Activated CD4-positive, alpha-beta T cell treated with anti-CD3 and anti-CD28 coated beads, Interleukin-2, amount 10 ng/mL, durations not matched to agents 24 days and 14 days (primary cell): ENCODE measurements at regions of chr10 and their contacts with region 1.

Region 1: DNA sequence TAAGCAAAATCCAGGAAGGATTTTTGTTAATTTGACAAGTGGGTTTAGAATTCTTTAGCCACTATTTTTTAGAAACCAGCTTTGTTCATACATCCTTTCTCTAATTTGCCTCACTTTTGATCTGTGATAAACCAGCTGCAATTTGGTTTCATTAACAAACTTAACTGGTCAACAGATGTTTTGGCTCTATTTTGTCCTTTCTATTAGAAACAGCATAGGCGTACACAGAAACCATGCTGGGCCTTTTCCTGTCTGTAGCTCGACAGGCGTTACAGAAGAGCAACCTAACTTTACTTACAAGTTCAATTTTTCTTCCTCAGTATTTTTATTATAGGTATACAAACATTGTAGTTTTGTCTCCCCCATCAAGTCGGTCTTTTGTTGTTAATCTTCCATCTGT is 28.2 kb downstream of the KAT6B start:
- DNase-seq: no peak
- H3K4me3 Mint-ChIP-seq: peak overlapping the region; percentile 52
- H3K27ac Mint-ChIP-seq: peak overlapping the region; percentile 76
- H3K4me1 Mint-ChIP-seq: peaks cover 21% of the 10 kb centered on the region
- H3K27me3 Mint-ChIP-seq: no peaks in the 10 kb centered on the region

Region 2: GRCh38 chr10:74799721-74800221 is 54.8 kb before region 1 on chr10:
- intact Hi-C with region 1: loop called (anchors 1 kb)
- DNase-seq: peak; percentile 64
- H3K4me3 Mint-ChIP-seq: no peak overlapping the region
- H3K27ac Mint-ChIP-seq: peak overlapping the region; percentile 73
- H3K4me1 Mint-ChIP-seq: peaks cover 10% of the 10 kb centered on the region
- H3K27me3 Mint-ChIP-seq: no peaks in the 10 kb centered on the region

Region 3: GRCh38 chr10:74871595-74872382 is 17.2 kb after region 1 on chr10:
- intact Hi-C with region 1: loop called (anchors 1 kb)
- DNase-seq: peak; percentile 70
- H3K4me3 Mint-ChIP-seq: peak overlapping the region; percentile 72
- H3K27ac Mint-ChIP-seq: peak overlapping the region; percentile 82
- H3K4me1 Mint-ChIP-seq: peaks cover 30% of the 10 kb centered on the region
- H3K27me3 Mint-ChIP-seq: no peaks in the 10 kb centered on the region

Region 4: GRCh38 chr10:74977913-74978847 is 123.6 kb after region 1 on chr10:
- intact Hi-C with region 1: loop called (anchors 1 kb)
- DNase-seq: peak; percentile 91
- H3K4me3 Mint-ChIP-seq: peak overlapping the region; percentile 71
- H3K27ac Mint-ChIP-seq: peak overlapping the region; percentile 91
- H3K4me1 Mint-ChIP-seq: peaks cover 47% of the 10 kb centered on the region
- H3K27me3 Mint-ChIP-seq: no peaks in the 10 kb centered on the region

Region 5: GRCh38 chr10:75012471-75012870 is 157.9 kb after region 1 on chr10:
- intact Hi-C with region 1: loop called (anchors 5 kb)
- DNase-seq: no peak
- H3K4me3 Mint-ChIP-seq: no peak overlapping the region
- H3K27ac Mint-ChIP-seq: peak overlapping the region; percentile 29
- H3K4me1 Mint-ChIP-seq: peaks cover 37% of the 10 kb centered on the region
- H3K27me3 Mint-ChIP-seq: no peaks in the 10 kb centered on the region